ENCODE measurements at regions of chr3 and their contacts with region 1.

Region 1: DNA sequence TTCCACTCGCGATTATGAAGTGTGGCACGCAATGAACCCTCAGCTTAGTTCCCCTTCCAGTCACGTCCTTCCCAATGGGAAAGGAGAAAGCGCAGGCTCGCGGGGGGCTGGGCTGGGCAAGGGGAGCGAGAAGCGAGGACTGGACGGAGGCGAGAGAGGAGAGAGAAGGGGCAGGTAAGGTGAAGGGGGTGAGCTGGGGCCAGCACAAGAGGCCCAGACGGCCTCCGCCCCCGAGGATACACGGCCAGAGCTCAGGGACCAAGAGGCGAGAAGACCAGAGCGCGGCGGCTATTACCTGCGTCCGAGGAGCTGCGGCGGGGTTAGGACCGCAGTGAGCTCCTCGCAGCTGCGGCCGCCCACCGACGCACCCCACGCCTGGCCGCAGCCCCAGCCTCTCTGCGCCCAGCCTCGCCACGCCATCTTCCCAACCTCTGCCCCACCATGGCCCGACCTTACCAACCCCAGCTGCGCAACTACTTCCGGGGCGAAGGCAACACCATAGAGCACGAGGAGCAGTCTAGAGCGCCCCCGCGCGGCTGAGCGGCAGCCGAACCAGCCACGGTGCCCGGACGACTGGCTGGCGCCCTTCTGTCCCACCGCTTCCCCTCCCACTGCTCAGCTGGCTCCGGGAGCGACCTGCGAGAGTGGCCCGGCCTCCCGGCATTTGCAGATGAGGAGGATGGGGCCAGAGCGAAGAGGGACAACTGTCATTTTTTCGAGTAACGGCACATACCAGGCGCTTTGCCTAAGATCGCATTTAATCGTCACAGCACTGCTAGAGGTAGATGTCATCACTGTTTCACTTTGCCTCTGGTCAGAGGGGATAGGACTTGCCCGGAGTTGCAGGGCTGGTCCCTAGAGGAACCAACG is at the start of gene PARL:
- DNase-seq: peak; percentile 93
- H3K4me3 Mint-ChIP-seq: peak within 1 kb of the TSS; percentile 98
- H3K27ac Mint-ChIP-seq: peak within 1 kb of the TSS; percentile 99
- H3K4me1 Mint-ChIP-seq: peaks cover 35% of the 10 kb centered on the region
- H3K27me3 Mint-ChIP-seq: no peaks in the 10 kb centered on the region
- total RNA-seq, gene PARL: 93.7 and 98.2 TPM in 2 replicates

Region 2: GRCh38 chr3:183555541-183556081 is 329.1 kb before region 1 on chr3 and contains the start of gene KLHL6:
- intact Hi-C with region 1: loop called (anchors 1 kb)
- DNase-seq: peak; percentile 71
- H3K4me3 Mint-ChIP-seq: peak within 1 kb of the TSS; percentile 97
- H3K27ac Mint-ChIP-seq: peak within 1 kb of the TSS; percentile 100
- H3K4me1 Mint-ChIP-seq: peaks cover 57% of the 10 kb centered on the region
- H3K27me3 Mint-ChIP-seq: no peaks in the 10 kb centered on the region
- total RNA-seq, gene KLHL6: 38.6 and 40.6 TPM in 2 replicates

Region 3: DNA sequence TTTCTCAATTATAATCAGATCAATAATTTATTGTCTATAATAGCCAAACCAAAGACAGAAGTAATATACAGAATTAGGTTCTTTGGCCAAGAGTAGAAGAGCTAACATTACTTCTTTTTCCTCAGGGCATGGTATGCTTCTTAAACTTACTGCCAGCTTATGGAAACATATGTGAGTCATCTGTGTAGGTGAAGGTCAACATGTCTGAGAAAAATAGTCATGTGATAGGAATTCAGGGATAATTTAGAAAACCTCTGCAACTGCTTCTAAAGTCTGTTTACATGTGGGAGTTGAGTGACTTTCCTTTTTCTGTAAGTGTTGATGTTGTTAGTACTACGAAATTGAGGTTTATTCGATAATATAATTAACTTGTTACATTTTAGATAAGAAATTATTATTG is 40.1 kb before region 1 on chr3:
- intact Hi-C with region 1: loop called (anchors 5 kb)
- DNase-seq: no peak
- H3K4me3 Mint-ChIP-seq: no peak overlapping the region
- H3K27ac Mint-ChIP-seq: peak overlapping the region; percentile 67
- H3K4me1 Mint-ChIP-seq: peaks cover 14% of the 10 kb centered on the region
- H3K27me3 Mint-ChIP-seq: no peaks in the 10 kb centered on the region

Region 4: DNA sequence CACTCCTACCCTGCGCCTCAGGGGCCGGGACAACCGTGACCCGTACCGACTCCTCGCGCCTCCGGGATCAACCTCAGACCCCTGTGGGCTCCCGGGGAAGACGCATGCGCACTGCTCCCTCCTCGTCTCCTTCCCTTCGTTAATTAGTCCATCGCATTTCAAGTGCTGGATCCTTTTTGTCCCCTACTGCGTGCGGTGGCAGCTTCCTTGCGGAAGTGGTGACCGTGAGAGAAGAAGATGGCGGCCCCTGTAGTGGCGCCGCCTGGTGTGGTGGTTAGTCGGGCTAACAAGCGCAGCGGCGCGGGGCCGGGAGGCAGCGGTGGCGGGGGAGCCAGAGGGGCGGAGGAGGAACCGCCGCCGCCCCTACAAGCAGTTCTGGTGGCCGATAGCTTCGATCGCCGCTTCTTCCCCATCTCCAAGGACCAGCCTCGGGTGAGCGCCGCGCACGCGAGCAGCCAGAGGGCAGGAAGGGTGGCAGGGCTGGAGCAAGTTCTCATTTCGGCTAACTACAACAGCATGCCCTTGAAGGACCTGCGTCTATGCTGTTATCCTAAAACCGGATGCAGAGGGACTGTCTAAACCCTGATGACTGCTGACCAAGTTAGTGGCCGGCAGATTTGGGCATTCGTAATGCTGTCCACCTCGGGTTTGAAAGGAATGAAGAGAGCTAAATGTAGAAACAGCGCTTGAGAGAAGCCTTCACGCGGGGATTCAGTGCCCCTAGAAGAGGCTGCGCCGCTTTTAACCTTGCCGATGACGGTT is 250.7 kb after region 1 on chr3 and contains the start of gene EIF2B5:
- intact Hi-C with region 1: loop called (anchors 1 kb)
- DNase-seq: peak; percentile 83
- H3K4me3 Mint-ChIP-seq: peak within 1 kb of the TSS; percentile 92
- H3K27ac Mint-ChIP-seq: peak within 1 kb of the TSS; percentile 85
- H3K4me1 Mint-ChIP-seq: peaks cover 31% of the 10 kb centered on the region
- H3K27me3 Mint-ChIP-seq: no peaks in the 10 kb centered on the region
- total RNA-seq, gene EIF2B5: 75.6 and 75.9 TPM in 2 replicates

Region 5: DNA sequence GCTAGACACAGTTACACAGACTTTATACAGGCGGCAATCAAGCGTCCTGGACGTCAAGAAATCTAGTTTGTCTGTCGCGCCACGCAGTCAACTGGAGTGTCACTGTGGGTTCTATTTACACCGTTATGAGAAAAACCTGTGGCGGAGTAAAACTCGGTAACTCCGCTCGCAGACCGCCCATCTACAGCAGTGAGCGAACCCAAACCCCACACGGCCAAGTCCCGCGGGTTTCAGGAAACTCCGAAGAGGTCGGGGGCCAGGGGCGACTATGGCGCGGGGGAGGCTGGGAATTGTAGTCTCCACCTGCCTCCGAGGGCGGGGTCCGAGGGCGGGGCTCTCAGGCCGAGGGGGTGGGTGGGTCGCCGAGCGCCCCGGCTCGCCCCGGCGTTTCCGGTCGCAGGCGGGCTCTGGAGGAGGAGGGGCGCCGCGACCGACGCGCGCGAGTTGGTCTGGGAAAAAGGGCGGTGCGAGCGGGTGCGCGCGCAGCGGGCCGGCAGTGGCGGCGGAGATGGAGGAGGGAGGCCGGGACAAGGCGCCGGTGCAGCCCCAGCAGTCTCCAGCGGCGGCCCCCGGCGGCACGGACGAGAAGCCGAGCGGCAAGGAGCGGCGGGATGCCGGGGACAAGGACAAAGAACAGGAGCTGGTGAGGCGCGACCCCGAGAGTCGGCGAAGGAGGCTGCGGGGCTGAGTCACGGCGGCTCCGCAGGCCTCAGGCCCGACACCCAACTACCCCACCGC is 414.3 kb after region 1 on chr3 and contains the start of gene PSMD2:
- intact Hi-C with region 1: loop called (anchors 1 kb)
- DNase-seq: peak; percentile 95
- H3K4me3 Mint-ChIP-seq: peak within 1 kb of the TSS; percentile 92
- H3K27ac Mint-ChIP-seq: peak within 1 kb of the TSS; percentile 85
- H3K4me1 Mint-ChIP-seq: peaks cover 23% of the 10 kb centered on the region
- H3K27me3 Mint-ChIP-seq: peaks cover 4% of the 10 kb centered on the region
- total RNA-seq, gene PSMD2: 251 and 255 TPM in 2 replicates

Region 6: DNA sequence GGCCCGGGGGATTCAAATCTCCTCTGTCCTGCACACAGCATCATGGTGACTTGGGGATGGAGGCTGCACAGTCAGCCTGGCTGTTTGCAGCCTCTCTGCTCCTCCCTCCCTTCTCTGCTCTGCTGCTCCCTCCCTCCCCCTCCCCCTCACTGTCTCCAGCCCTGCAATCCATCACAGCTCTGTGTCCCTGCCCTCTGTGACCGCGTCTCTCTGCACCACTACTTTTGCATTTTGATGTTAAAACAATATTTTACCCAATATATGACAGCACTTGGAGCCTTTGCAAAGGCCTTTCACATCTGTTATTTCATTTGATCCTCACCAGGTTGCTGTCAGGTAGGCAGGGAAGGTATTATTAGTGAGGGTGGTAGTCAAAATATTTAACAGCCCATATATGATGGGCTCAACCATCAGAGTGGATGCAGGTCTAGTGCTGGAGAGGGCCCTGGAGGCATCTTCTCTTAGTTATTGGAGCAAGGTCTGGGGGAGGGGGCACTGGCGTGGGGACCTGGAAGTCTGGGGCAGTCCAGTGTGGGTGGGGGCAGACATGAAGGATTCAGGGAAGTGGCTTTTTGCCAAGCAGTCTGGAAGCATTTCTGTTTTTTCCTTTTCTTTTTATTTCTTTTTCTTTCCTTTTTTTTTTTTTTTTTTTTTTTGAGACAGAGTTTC is 911.0 kb after region 1 on chr3:
- intact Hi-C with region 1: no loop called
- DNase-seq: no peak
- H3K4me3 Mint-ChIP-seq: no peak overlapping the region
- H3K27ac Mint-ChIP-seq: no peak overlapping the region
- H3K4me1 Mint-ChIP-seq: no peaks in the 10 kb centered on the region
- H3K27me3 Mint-ChIP-seq: peaks cover 28% of the 10 kb centered on the region

Measured in activated T-helper 1 cell treated with anti-CD3 and anti-CD28 coated beads, Interleukin-12 subunit alpha, Interleukin-12 subunit beta, Interleukin-2, Interleukin-4 antibody, amounts not matched to agents 30 ng/mL and 10 ng/mL and 1 ng/mL, durations not matched to agents 14 hours and 24 hours and 36 hours (primary cell).